Head of caudate nucleus (tissue), 42 donors: ENCODE measurements at regions of chr6 and their contacts with region 1.

Region 1: GRCh38 chr6:30828027-30828960 is 56.0 kb upstream of the DDR1 start:
- DNase-seq: peak; percentile 80 to 97 (median 91)

Region 2: DNA sequence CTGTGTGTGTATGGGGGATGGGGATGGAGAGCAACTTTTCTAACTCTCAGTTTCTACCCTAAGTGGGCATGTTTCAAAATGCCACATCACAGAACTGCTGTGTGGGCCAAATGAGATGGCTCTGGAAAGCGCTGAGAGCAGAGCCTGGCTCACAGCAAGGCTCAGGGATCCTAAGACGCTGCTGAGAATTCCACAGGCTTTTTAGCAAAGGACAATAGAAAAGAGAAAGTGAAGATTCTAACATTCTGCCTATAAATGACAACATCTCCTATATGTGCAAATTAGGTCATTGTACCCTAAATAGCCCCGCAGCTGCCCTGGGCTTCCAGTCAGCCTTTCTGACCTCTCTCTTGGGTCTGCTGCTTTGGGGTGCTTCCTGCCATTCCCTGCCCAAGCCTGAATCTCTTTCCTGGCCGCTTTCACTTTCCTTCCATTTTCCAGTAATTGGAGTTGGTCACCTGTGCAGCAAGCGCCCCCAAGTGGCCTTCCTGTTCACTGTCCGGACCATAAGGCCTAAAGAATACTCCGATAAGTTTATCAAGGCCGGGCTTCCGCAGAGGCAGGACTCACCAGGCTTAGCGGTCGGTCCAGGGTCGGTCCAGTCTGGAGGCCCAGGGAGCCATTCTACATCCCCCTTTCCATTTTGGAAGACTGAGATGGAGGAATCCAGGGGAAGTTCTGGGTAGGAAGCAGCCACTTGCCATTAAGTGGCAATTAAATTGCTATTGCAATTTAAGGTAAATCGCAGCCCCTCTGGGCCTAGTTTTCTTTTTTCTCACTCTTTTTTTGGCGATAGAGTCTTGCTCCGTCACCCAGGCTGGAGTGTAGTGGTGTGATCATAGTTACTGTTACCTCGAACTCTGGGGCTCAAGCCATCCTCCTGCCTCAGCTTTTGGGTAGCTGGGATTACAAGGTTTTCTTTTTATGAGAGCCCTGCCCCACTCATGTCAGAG is 49.4 kb after region 1 on chr6:
- intact Hi-C with region 1: loop called (anchors 2 kb)
- DNase-seq: peak; percentile 78 to 96 (median 90)

Region 3: GRCh38 chr6:31079656-31080261 is 251.5 kb after region 1 on chr6:
- intact Hi-C with region 1: loop called (anchors 5 kb)
- DNase-seq: peak; percentile 46 to 91 (median 80)

Region 4: GRCh38 chr6:31158140-31158862 is 330.0 kb after region 1 on chr6 and contains the start of gene TCF19:
- intact Hi-C with region 1: no loop called
- DNase-seq: peak; percentile 93 to 99 (median 97)